Activated naive CD4-positive, alpha-beta T cell treated with anti-CD3 and anti-CD28 coated beads, Interleukin-2, amount 10 ng/mL, durations not matched to agents 7 days and 5 days (primary cell): ENCODE measurements at regions of chr2 and their contacts with region 1.

Region 1: DNA sequence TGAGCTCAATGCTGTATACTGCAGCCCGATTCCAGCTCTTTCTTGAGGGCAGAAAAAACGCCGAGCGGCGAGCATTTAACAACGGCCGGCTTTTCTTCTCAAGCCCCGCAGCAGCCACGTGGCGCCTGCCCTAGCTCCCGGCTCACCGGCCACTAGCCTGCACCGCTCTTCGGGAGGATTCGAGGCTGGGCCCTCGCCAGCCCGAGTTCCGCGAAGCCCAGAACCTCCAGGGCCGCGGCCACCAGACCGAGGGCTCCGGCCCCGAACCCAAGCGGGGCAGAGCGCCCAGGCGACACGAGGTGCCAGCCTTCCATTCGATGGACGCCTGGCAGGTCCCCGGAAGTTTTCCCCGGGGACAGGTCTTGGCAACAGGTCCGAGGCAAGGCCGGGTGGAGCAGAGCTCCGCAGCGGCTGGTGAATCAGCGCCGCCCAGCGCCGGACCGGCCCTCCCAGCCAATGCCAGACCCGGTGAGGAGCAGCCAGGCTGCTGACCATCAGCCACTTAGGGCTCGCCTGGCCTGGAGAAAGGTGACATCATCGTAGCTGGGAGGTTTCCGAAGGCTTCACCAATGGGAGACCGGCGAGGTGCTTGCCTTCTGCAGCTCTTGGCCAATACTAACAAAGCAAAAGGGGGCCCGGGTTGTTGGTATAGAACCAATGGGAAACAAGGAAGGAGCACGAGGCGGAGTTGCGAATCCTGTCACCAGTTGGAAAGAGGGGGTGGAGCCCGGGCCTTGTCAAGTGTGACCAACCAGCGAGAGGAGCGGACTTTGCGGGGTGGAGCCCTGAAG is 544 bp upstream of the MXD1 start:
- DNase-seq: peak; percentile 100
- H3K4me3 Mint-ChIP-seq: peak overlapping the region; percentile 83
- H3K27ac Mint-ChIP-seq: peak overlapping the region; percentile 92
- H3K4me1 Mint-ChIP-seq: peaks cover 39% of the 10 kb centered on the region
- H3K27me3 Mint-ChIP-seq: no peaks in the 10 kb centered on the region

Region 2: DNA sequence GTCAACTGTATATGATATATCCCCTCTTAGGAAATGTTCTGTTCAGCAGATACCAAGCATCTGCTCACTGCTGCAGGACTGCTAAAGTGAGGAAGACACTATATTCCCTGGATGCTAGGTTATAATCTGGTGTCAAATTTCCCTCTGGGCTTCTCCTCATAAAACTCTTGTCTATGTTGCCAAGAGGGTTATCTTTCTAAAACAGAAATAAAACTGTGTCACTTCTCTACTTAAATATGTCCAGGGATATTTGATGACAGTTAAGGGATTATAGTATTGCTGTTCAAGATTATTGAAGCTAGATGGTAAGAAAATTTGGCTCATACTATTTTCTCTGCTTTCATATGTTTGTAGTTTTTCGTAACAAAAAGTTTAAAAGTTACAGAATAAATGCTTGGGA is 51.1 kb before region 1 on chr2:
- CTCF ChIA-PET with region 1: no interaction called
- DNase-seq: no peak
- H3K4me3 Mint-ChIP-seq: no peak overlapping the region
- H3K27ac Mint-ChIP-seq: peak overlapping the region; percentile 9
- H3K4me1 Mint-ChIP-seq: no peaks in the 10 kb centered on the region
- H3K27me3 Mint-ChIP-seq: no peaks in the 10 kb centered on the region

Region 3: GRCh38 chr2:69902213-69902922 is 12.0 kb before region 1 on chr2:
- CTCF ChIA-PET with region 1: interaction called, 13 read pairs
- DNase-seq: peak; percentile 39
- H3K4me3 Mint-ChIP-seq: peak overlapping the region; percentile 72
- H3K27ac Mint-ChIP-seq: peak overlapping the region; percentile 89
- H3K4me1 Mint-ChIP-seq: peaks cover 43% of the 10 kb centered on the region
- H3K27me3 Mint-ChIP-seq: no peaks in the 10 kb centered on the region

Region 4: GRCh38 chr2:70062268-70062667 is 147.9 kb after region 1 on chr2:
- CTCF ChIA-PET with region 1: interaction called, 49 read pairs
- DNase-seq: no peak
- H3K4me3 Mint-ChIP-seq: no peak overlapping the region
- H3K27ac Mint-ChIP-seq: no peak overlapping the region
- H3K4me1 Mint-ChIP-seq: peaks cover 21% of the 10 kb centered on the region
- H3K27me3 Mint-ChIP-seq: no peaks in the 10 kb centered on the region

Region 5: GRCh38 chr2:70070541-70071268 is 156.3 kb after region 1 on chr2:
- CTCF ChIA-PET with region 1: interaction called, 75 read pairs
- DNase-seq: peak; percentile 71
- H3K4me3 Mint-ChIP-seq: peak overlapping the region; percentile 42
- H3K27ac Mint-ChIP-seq: peak overlapping the region; percentile 96
- H3K4me1 Mint-ChIP-seq: peaks cover 65% of the 10 kb centered on the region
- H3K27me3 Mint-ChIP-seq: no peaks in the 10 kb centered on the region

Region 6: GRCh38 chr2:70142590-70143313 is 228.4 kb after region 1 on chr2:
- CTCF ChIA-PET with region 1: interaction called, 74 read pairs
- DNase-seq: peak; percentile 99
- H3K4me3 Mint-ChIP-seq: peak overlapping the region; percentile 81
- H3K27ac Mint-ChIP-seq: peak overlapping the region; percentile 98
- H3K4me1 Mint-ChIP-seq: peaks cover 81% of the 10 kb centered on the region
- H3K27me3 Mint-ChIP-seq: no peaks in the 10 kb centered on the region

Region 7: DNA sequence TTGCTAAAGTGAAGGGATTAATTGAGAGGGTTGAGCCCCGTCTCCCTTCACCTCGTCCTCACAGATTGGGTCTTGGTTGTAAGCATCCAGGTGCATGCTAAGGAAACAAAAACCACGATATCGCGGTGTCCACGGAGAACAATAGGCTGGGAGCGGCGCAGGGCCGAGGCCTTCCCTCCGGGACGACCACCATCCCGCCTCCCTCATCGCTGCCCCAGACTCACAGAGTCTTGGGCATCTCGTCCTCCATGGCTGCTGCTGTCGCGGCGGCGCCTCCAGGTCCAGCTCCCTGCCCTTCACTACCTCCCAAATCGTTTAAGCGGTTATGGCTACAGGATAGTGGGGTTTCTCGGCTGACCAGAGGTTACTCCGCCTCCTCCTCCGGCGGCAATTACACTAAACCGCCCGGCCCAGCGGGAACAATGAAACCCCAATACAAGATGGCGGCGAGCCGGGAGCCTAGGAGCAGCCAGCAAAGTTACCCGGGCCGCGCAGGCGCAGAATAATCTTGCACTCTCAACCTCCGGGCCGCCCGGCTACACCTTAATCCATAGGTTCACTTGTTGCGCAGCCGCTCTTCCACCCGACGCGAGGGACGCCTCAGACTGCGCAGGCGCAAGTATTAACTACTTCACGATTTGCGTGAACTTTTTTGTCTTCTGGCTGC is 333.9 kb after region 1 on chr2 and contains the start of gene TIA1:
- CTCF ChIA-PET with region 1: no interaction called
- DNase-seq: peak; percentile 99
- H3K4me3 Mint-ChIP-seq: peak within 1 kb of the TSS; percentile 89
- H3K27ac Mint-ChIP-seq: peak within 1 kb of the TSS; percentile 95
- H3K4me1 Mint-ChIP-seq: peaks cover 29% of the 10 kb centered on the region
- H3K27me3 Mint-ChIP-seq: peaks cover 5% of the 10 kb centered on the region